ENCODE measurements at regions of chr4 and their contacts with region 1.

Region 1: GRCh38 chr4:137735561-137736104 is 203.3 kb upstream of the PCDH18 start:
- DNase-seq: no peak
- H3K4me3 ChIP-seq: no peak overlapping the region
- H3K4me3 Mint-ChIP-seq: no peak overlapping the region
- H3K27ac Mint-ChIP-seq: no peak overlapping the region
- H3K4me1 ChIP-seq: no peaks in the 10 kb centered on the region
- H3K4me1 Mint-ChIP-seq: peaks cover 6% of the 10 kb centered on the region
- H3K27me3 ChIP-seq: no peaks in the 10 kb centered on the region
- H3K27me3 Mint-ChIP-seq: no peaks in the 10 kb centered on the region
- CTCF ChIP-seq: no peak

Region 2: DNA sequence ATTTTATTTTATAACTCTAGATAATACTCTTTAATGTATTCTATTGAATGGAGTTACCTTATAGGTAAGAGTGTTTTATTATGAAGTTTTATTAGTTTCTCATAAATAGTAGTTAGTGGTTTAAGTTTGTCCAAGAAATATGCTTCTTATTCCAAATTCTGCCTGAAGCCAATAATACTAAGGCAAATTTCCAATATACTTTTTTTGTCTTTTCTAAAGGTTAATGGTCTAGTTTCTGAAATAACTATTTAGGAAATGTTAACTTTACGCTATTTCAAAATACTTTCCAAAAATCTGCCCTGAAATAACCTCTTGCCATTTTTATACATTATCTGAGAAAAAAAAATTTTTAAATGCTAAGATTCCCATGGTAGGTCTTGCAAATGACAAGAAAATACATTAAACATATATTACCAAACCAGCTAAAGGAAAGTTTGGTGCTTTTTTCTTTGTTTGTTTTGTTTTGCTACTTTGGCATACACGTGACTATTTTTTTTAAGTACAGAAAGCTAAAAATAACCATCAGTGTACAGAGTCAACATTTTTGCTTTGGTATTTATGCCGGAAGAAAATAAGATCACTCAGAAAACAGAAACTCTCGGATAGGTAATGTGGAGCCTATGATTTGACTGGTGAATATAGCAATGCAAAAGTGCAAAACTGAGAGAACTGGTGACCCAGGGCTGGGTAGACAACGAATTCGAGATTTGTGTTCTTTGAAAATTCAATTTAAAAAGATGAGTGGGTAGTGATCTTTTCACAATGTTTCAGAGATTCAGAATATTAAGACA is 233.1 kb before region 1 on chr4:
- CTCF ChIA-PET with region 1: no interaction called
- POLR2A ChIA-PET with region 1: no interaction called
- intact Hi-C with region 1: no loop called
- DNase-seq: no peak
- H3K4me3 ChIP-seq: no peak overlapping the region
- H3K4me3 Mint-ChIP-seq: no peak overlapping the region
- H3K27ac Mint-ChIP-seq: no peak overlapping the region
- H3K4me1 ChIP-seq: no peaks in the 10 kb centered on the region
- H3K4me1 Mint-ChIP-seq: no peaks in the 10 kb centered on the region
- H3K27me3 ChIP-seq: no peaks in the 10 kb centered on the region
- H3K27me3 Mint-ChIP-seq: no peaks in the 10 kb centered on the region
- CTCF ChIP-seq: no peak

Region 3: GRCh38 chr4:137861682-137862081 is 126.0 kb after region 1 on chr4:
- CTCF ChIA-PET with region 1: interaction called, 4 read pairs
- POLR2A ChIA-PET with region 1: no interaction called
- intact Hi-C with region 1: loop called (anchors 1 kb)
- DNase-seq: peak in 1 of 2 experiments; percentile 7
- H3K4me3 ChIP-seq: no peak overlapping the region
- H3K4me3 Mint-ChIP-seq: no peak overlapping the region
- H3K27ac Mint-ChIP-seq: no peak overlapping the region
- H3K4me1 ChIP-seq: no peaks in the 10 kb centered on the region
- H3K4me1 Mint-ChIP-seq: peaks cover 7% of the 10 kb centered on the region
- H3K27me3 ChIP-seq: no peaks in the 10 kb centered on the region
- H3K27me3 Mint-ChIP-seq: no peaks in the 10 kb centered on the region
- CTCF ChIP-seq: peak; percentile 14 to 15

Region 4: DNA sequence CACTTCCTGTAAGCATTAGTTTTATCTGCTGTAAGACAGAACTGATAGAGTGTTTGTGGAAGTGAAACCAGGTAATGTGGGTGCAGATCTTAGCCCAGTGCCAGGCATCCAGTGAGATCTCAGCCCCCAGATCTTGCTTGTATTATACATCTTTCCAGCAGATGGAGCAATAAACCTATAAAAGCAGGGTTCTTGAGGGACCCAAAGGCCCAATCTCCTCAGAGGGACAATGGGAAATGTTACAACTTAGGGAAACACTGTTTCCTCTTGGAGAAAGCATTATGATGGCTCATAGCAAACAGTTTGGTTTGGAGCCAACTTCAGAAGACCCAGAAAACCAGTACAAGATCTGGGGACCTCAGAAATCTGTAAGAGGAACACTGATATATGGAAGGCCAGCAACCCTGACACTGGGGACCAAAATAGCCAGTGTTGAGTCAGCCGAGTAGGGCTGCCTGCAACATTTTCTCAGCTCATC is 300.2 kb after region 1 on chr4:
- CTCF ChIA-PET with region 1: no interaction called
- POLR2A ChIA-PET with region 1: no interaction called
- intact Hi-C with region 1: loop called (anchors 10 kb)
- DNase-seq: peak in 1 of 2 experiments; percentile 56
- H3K4me3 ChIP-seq: no peak overlapping the region
- H3K4me3 Mint-ChIP-seq: no peak overlapping the region
- H3K27ac Mint-ChIP-seq: no peak overlapping the region
- H3K4me1 ChIP-seq: no peaks in the 10 kb centered on the region
- H3K4me1 Mint-ChIP-seq: peaks cover under 1% of the 10 kb centered on the region
- H3K27me3 ChIP-seq: no peaks in the 10 kb centered on the region
- H3K27me3 Mint-ChIP-seq: no peaks in the 10 kb centered on the region
- CTCF ChIP-seq: peak; percentile 58 to 67

Region 5: DNA sequence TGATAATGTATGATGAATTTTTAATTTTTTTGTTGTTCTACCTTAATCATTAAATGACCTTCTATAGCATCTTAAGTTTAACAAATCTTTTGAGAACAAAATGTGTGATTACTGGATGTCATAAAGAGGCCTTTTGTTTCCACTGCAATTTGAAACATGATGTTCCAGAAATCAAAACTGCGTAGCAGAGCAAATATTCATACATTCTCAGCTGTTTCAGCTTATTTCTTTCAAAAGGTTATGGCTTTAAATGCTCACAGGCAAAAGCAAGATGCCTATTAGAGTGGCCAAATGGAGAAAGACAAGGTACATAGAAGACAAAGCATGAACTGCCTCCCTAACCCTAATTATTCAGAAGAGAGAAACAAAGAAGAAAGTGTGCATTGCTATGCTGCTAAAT is 739.5 kb after region 1 on chr4:
- CTCF ChIA-PET with region 1: no interaction called
- POLR2A ChIA-PET with region 1: no interaction called
- intact Hi-C with region 1: no loop called
- DNase-seq: no peak
- H3K4me3 ChIP-seq: no peak overlapping the region
- H3K4me3 Mint-ChIP-seq: no peak overlapping the region
- H3K27ac Mint-ChIP-seq: no peak overlapping the region
- H3K4me1 ChIP-seq: no peaks in the 10 kb centered on the region
- H3K4me1 Mint-ChIP-seq: no peaks in the 10 kb centered on the region
- H3K27me3 ChIP-seq: no peaks in the 10 kb centered on the region
- H3K27me3 Mint-ChIP-seq: peaks cover 5% of the 10 kb centered on the region
- CTCF ChIP-seq: no peak

Region 6: GRCh38 chr4:138576684-138577083 is 841.1 kb after region 1 on chr4:
- CTCF ChIA-PET with region 1: interaction called, 3 read pairs
- POLR2A ChIA-PET with region 1: no interaction called
- intact Hi-C with region 1: loop called (anchors 1 kb)
- DNase-seq: peak in 1 of 2 experiments; percentile 33
- H3K4me3 ChIP-seq: no peak overlapping the region
- H3K4me3 Mint-ChIP-seq: no peak overlapping the region
- H3K27ac Mint-ChIP-seq: no peak overlapping the region
- H3K4me1 ChIP-seq: no peaks in the 10 kb centered on the region
- H3K4me1 Mint-ChIP-seq: no peaks in the 10 kb centered on the region
- H3K27me3 ChIP-seq: no peaks in the 10 kb centered on the region
- H3K27me3 Mint-ChIP-seq: no peaks in the 10 kb centered on the region
- CTCF ChIP-seq: peak; percentile 47 to 63